ENCODE measurements at regions of chr9 and their contacts with region 1.

Region 1: GRCh38 chr9:73023025-73023541 is 70.2 kb upstream of the ALDH1A1 start:
- DNase-seq: peak; percentile 58
- ATAC-seq: no peak; the same call in 1 of the 2 replicates
- H3K4me3 Mint-ChIP-seq: no peak overlapping the region
- H3K27ac Mint-ChIP-seq: no peak overlapping the region
- H3K4me1 Mint-ChIP-seq: no peaks in the 10 kb centered on the region
- H3K27me3 Mint-ChIP-seq: no peaks in the 10 kb centered on the region
- CTCF ChIP-seq: peak; percentile 63

Region 2: GRCh38 chr9:72843520-72844439 is 179.3 kb before region 1 on chr9:
- CTCF ChIA-PET with region 1: interaction called, 12 read pairs
- POLR2A ChIA-PET with region 1: no interaction called
- DNase-seq: peak; percentile 34
- ATAC-seq: peak; percentile 100
- H3K4me3 Mint-ChIP-seq: no peak overlapping the region
- H3K27ac Mint-ChIP-seq: no peak overlapping the region
- H3K4me1 Mint-ChIP-seq: peaks cover 15% of the 10 kb centered on the region
- H3K27me3 Mint-ChIP-seq: no peaks in the 10 kb centered on the region; the same call in 1 of the 2 replicates
- CTCF ChIP-seq: no peak

Region 3: DNA sequence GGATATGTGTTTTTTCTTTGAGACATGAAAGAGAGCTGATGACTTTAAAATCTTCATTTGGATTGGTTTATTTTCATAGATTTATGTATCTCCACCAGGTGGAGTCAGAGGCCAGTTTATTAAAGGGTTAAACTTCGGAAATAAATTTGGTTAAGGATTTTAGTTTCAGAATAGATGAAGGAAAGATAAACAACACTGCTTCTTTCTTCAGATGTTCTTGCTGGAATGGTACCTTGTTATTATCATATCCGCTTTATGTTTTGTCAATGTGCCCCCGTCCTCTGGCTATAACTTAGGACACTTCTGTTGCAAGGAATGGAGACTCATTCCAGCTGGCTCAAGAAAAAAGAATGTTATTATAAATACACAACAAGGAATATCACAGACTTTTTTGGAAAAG is 151.4 kb before region 1 on chr9:
- CTCF ChIA-PET with region 1: interaction called, 15 read pairs
- POLR2A ChIA-PET with region 1: no interaction called
- DNase-seq: no peak
- ATAC-seq: no peak
- H3K4me3 Mint-ChIP-seq: no peak overlapping the region
- H3K27ac Mint-ChIP-seq: no peak overlapping the region
- H3K4me1 Mint-ChIP-seq: peaks cover 7% of the 10 kb centered on the region
- H3K27me3 Mint-ChIP-seq: no peaks in the 10 kb centered on the region
- CTCF ChIP-seq: 0 out of 2 replicates have a peak, but pooled peaks have one; percentile 16

Region 4: DNA sequence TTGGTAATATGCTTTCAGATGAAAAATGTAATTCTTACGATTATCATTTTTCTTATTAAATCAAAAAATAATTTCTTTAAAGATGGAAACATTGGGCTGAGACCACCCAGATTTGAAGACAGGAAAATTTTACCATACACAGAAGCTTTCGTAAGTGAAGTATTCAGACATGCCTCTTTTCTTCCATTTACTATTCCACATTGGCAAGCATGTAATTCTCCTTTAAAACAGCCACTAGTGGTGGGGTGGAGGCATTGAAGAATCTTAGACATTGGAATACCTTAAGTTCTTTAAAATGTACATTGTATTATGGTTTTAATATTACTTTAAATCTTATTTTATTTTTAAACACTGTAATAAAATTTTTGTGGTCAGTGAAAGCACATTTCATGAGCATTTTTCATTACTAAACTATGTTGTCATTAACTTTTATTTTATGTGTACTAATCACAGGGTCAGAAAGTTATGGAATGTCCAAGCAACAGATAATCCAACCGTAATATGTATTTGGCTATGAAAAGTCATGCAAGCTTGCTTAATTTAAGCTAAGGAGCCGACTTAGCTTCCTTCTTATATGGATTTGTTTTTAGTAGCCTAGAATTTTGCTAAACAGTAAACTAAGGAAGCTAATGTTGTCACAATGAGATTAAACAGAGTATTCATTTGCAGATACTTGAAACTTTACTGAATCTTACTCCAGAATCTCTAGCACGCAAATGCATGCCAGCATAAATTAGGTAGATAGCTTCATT is 27.2 kb after region 1 on chr9:
- CTCF ChIA-PET with region 1: interaction called, 10 read pairs
- POLR2A ChIA-PET with region 1: no interaction called
- DNase-seq: no peak
- ATAC-seq: no peak
- H3K4me3 Mint-ChIP-seq: no peak overlapping the region
- H3K27ac Mint-ChIP-seq: 0 out of 2 replicates have a peak overlapping the region, but pooled peaks have one; percentile 65
- H3K4me1 Mint-ChIP-seq: peaks cover 42% of the 10 kb centered on the region
- H3K27me3 Mint-ChIP-seq: no peaks in the 10 kb centered on the region
- CTCF ChIP-seq: no peak